ENCODE measurements at regions of chr21 and their contacts with region 1.

Region 1: GRCh38 chr21:14675774-14676530 is 129.8 kb upstream of the SAMSN1 start:
- DNase-seq: no peak
- H3K4me3 Mint-ChIP-seq: peak overlapping the region; percentile 64
- H3K27ac Mint-ChIP-seq: peak overlapping the region; percentile 94
- H3K4me1 Mint-ChIP-seq: peaks cover 32% of the 10 kb centered on the region
- H3K27me3 Mint-ChIP-seq: no peaks in the 10 kb centered on the region

Region 2: DNA sequence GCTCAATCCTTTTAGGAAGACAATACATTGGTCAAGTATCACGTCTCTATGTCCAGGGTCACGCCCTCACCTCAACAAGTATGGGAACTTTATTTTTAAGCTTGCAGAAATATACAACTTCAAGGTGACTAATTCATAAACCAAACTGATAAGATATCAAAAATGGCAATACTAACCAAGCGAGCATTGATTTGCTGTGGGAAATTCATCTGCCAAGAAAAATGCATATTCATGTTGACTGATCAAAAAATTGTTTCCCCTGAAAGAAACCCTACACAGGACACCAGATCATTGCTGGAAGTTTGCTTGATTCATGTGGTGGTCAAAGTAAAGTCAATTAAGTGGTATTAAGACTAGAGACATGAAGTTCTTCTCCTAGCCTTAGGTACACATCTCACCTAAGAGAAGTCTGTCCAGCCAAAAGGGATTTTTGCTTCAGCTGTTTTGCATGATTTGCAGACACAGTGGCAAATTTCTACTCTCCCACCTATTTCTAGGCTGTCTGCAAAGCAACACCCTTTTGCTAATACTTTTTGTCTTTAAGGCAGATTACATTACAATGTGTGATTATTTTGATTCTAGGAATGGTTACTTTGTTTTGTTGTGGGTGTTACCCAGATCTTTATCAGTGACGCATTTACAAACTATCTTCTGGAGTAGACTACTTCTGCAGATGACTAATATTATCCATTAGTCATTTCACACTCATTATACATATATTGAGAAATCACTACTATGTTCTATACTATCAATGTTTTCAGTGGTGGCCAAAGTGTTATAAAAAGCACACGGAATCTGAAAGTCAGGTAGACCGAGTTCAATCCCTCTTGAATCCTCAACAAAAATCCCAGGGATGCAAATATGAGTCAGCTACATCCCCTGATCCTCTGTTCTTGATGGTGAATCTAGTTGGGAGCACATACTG is 142.2 kb before region 1 on chr21:
- CTCF ChIA-PET with region 1: no interaction called
- POLR2A ChIA-PET with region 1: no interaction called
- intact Hi-C with region 1: loop called (anchors 5 kb)
- DNase-seq: peak; percentile 29
- H3K4me3 Mint-ChIP-seq: peak overlapping the region; percentile 95
- H3K27ac Mint-ChIP-seq: peak overlapping the region; percentile 100
- H3K4me1 Mint-ChIP-seq: peaks cover 82% of the 10 kb centered on the region
- H3K27me3 Mint-ChIP-seq: peaks cover 2% of the 10 kb centered on the region

Region 3: DNA sequence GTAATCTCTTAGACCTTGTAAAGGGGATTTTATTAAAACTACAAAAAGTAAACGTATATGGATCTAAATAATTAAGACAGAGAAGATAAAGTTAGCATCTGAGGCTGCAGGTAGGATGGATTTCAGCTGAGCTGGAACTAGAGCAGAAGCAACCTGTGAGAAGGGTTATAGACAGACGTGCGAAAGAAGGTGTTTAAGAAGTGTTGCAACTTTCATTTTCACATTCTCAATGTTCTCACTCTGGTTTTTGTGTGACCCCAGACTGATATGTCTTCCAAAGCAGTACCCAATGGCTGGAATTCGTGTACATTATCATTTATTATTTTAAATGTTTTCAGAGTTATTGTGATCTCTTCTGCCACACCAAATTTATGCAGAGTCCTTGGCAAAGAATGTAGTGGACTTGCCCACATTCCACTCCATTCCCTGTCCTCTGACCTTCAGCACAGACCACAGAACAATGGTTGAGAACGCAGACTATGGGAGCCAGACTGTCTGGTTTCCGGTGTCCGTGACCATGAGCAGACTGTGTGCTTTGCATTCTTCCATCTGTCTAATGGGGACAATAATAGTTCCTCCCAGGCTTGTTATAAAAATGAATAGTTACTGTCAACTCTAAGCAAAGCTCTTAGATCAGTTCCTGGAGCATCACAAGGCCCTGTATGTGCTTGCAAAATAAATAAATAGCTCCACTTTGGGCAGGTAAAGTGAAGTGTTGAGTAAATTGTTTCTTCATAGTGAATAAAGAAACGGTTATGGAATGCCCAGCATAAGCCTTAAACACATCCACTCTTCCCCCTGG is 10.7 kb after region 1 on chr21:
- CTCF ChIA-PET with region 1: no interaction called
- POLR2A ChIA-PET with region 1: no interaction called
- intact Hi-C with region 1: loop called (anchors 1 kb)
- DNase-seq: no peak
- H3K4me3 Mint-ChIP-seq: peak overlapping the region; percentile 2
- H3K27ac Mint-ChIP-seq: no peak overlapping the region
- H3K4me1 Mint-ChIP-seq: peaks cover 26% of the 10 kb centered on the region
- H3K27me3 Mint-ChIP-seq: no peaks in the 10 kb centered on the region

Region 4: DNA sequence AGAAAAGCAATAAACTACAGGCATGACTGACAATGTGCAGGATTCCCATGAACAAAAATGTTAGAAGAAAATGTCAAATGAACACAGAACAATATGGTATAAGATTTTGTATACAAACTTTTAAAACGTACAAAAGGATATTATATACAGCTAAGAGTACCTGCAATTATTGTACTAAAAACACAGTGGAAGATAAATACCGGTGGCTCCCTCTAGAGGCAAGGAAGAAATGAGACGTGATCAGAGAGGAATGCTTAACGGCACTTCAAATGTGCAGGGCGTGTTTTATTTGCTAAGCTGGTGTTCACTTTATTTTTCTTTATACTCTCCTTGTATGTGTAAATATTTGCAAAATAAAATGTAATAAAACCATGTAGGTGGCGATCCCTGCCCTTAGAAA is 62.0 kb after region 1 on chr21:
- CTCF ChIA-PET with region 1: interaction called, 3 read pairs
- POLR2A ChIA-PET with region 1: no interaction called
- intact Hi-C with region 1: loop called (anchors 5 kb)
- DNase-seq: peak; percentile 38
- H3K4me3 Mint-ChIP-seq: no peak overlapping the region
- H3K27ac Mint-ChIP-seq: no peak overlapping the region
- H3K4me1 Mint-ChIP-seq: peaks cover 31% of the 10 kb centered on the region
- H3K27me3 Mint-ChIP-seq: no peaks in the 10 kb centered on the region

Measured in activated CD4-positive, alpha-beta memory T cell treated with anti-CD3 and anti-CD28 coated beads for 36 hours (primary cell).